ENCODE measurements at regions of chr6 and their contacts with region 1.

Region 1: DNA sequence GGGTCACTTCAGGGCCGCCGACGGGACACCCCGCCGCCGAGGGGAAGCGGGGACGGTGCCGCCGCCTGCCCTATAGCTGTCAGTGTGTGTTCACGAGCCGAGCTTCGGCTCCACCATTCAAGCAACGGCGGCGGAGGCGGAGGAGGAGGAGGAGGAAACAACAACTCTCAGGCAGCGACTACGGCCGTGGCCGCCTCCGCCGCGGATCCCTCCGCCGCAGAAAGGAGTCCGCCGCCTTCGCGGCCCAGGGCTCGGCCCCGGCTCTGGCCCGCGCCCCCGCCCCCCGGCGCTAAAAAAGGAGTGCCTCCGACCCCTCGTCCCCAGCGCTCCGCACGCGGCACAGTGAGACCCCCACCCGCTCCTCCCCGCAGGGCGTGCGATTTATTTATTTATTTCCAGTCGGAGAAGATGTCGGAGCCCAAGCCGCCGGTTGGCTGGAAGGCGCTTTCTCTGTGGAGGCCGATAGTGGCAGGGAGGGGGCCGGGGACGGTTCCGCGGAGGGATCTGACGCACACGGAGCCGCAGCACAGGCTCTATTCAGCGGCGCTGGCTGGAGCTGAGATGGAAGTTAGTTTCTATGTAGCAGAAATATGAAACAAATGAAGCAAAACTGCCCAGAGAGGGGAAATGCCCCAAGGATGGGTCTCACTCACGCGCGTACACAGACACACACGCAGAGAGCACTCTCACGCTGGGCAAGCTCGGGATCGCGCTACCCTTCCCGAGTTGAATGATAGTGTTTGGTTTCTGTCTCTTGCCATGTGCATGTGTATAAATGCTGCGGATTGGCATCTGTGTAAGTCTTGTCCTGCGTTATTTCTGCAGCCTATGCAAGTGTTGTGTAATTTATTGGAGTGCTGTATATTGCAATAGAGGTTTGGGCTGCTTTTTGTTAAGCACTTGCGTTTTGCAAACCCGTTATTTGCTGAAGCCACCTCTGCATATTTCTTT is at the start of gene PHIP:
- DNase-seq: peak; percentile 87
- H3K4me3 Mint-ChIP-seq: peak within 1 kb of the TSS; percentile 93
- H3K27ac Mint-ChIP-seq: peak within 1 kb of the TSS; percentile 98
- H3K4me1 Mint-ChIP-seq: peaks cover 34% of the 10 kb centered on the region
- H3K27me3 Mint-ChIP-seq: peaks cover 20% of the 10 kb centered on the region
- total RNA-seq, gene PHIP: 34.8 and 37.2 TPM in 2 replicates

Region 2: GRCh38 chr6:78770766-78771165 is 307.6 kb before region 1 on chr6:
- intact Hi-C with region 1: no loop called
- DNase-seq: no peak
- H3K4me3 Mint-ChIP-seq: no peak overlapping the region
- H3K27ac Mint-ChIP-seq: no peak overlapping the region
- H3K4me1 Mint-ChIP-seq: no peaks in the 10 kb centered on the region
- H3K27me3 Mint-ChIP-seq: no peaks in the 10 kb centered on the region

Region 3: GRCh38 chr6:78867370-78868040 is 210.8 kb before region 1 on chr6 and contains the start of gene IRAK1BP1:
- intact Hi-C with region 1: loop called (anchors 1 kb)
- DNase-seq: peak; percentile 79
- H3K4me3 Mint-ChIP-seq: peak within 1 kb of the TSS; percentile 97
- H3K27ac Mint-ChIP-seq: peak within 1 kb of the TSS; percentile 95
- H3K4me1 Mint-ChIP-seq: peaks cover 21% of the 10 kb centered on the region
- H3K27me3 Mint-ChIP-seq: peaks cover 2% of the 10 kb centered on the region
- total RNA-seq, gene IRAK1BP1: 3.0 TPM in 2 replicates

Region 4: DNA sequence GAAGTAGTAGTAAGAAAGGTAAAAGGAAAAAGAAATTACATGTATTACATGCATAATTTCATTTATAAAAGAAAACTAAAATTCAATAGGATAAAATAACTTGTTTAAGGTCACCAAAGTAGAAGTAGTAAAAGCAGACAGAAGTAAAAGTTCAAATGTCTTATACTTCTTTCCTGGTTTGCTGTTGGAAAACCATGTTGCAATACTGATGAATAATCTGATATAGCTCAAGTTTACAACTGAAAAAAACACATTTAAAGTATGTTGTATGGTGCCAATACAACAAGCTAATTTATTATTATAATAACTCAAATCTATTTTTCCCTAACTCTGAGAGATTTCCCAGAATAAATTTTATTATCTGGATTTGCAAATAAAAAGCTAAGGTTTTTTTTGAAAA is 78.6 kb before region 1 on chr6:
- intact Hi-C with region 1: no loop called
- DNase-seq: no peak
- H3K4me3 Mint-ChIP-seq: no peak overlapping the region
- H3K27ac Mint-ChIP-seq: no peak overlapping the region
- H3K4me1 Mint-ChIP-seq: no peaks in the 10 kb centered on the region
- H3K27me3 Mint-ChIP-seq: no peaks in the 10 kb centered on the region

Region 5: GRCh38 chr6:79040083-79040482 is 38.3 kb before region 1 on chr6:
- intact Hi-C with region 1: loop called (anchors 1 kb)
- DNase-seq: no peak
- H3K4me3 Mint-ChIP-seq: no peak overlapping the region
- H3K27ac Mint-ChIP-seq: no peak overlapping the region
- H3K4me1 Mint-ChIP-seq: peaks cover 36% of the 10 kb centered on the region
- H3K27me3 Mint-ChIP-seq: no peaks in the 10 kb centered on the region

Region 6: GRCh38 chr6:79335133-79335674 is 256.9 kb after region 1 on chr6:
- intact Hi-C with region 1: loop called (anchors 2 kb)
- DNase-seq: no peak
- H3K4me3 Mint-ChIP-seq: no peak overlapping the region
- H3K27ac Mint-ChIP-seq: peak overlapping the region; percentile 18
- H3K4me1 Mint-ChIP-seq: peaks cover 14% of the 10 kb centered on the region
- H3K27me3 Mint-ChIP-seq: no peaks in the 10 kb centered on the region

Region 7: GRCh38 chr6:79777713-79778579 is 699.6 kb after region 1 on chr6:
- intact Hi-C with region 1: loop called (anchors 5 kb)
- DNase-seq: peak; percentile 85
- H3K4me3 Mint-ChIP-seq: peak overlapping the region; percentile 67
- H3K27ac Mint-ChIP-seq: peak overlapping the region; percentile 21
- H3K4me1 Mint-ChIP-seq: peaks cover 10% of the 10 kb centered on the region
- H3K27me3 Mint-ChIP-seq: no peaks in the 10 kb centered on the region

Region 8: DNA sequence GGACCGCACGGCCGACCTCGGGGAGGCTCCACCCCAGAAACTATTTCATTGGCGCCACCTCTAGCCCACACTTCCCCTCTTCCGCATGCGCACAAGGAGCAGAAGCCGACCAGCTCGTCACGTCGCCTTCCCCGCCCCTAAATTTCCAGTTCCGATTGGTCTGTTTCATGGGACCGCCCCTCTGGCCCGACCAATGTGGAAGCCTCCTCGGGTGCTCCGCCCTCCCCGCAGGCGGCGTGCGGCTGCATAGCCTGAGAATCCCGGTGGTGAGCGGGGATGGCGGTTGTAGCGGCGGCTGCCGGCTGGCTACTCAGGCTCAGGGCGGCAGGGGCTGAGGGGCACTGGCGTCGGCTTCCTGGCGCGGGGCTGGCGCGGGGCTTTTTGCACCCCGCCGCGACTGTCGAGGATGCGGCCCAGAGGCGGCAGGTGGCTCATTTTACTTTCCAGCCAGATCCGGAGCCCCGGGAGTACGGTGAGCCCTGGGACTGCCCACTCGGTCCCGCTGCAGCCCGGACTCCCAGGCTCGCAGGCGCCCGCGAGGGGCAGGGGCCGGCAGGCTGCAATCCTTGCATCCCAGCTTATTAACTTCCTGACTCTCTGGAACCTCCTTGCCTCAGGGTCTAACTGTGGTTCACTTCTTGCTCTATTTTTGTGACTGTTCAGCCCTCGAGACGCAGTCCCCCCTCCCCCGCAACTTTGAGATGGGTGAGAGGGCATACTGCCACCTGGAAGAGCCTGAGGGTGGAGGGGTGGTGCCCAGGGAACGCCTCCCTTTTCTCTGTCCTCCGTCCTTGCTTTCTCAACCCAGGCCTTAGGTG is 1028.3 kb after region 1 on chr6 and contains the start of gene BCKDHB:
- intact Hi-C with region 1: loop called (anchors 10 kb)
- DNase-seq: peak; percentile 98
- H3K4me3 Mint-ChIP-seq: peak within 1 kb of the TSS; percentile 96
- H3K27ac Mint-ChIP-seq: peak within 1 kb of the TSS; percentile 90
- H3K4me1 Mint-ChIP-seq: peaks cover 31% of the 10 kb centered on the region
- H3K27me3 Mint-ChIP-seq: peaks cover 2% of the 10 kb centered on the region
- total RNA-seq, gene BCKDHB: 13.3 and 14.4 TPM in 2 replicates